ENCODE measurements at regions of chr10 and their contacts with region 1.

Region 1: DNA sequence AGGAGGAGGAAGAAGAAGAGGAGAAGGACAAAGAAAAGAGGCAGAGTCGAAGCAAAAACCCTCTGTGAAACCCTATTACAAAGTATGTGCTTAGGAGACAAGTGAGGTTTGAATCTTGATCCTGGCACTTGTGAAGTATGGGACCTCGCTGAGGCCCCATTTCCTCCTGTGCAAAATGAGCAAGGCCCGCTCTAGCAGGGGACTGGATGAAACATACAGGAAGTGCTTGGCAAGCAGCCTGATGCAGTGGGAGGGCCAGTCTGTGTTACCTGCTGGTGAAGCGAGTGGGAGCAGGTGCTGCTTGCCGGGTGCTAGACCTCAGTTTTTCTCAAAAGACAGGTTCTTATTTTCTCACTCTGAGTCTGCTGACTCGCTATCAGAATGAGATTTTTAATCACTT is 150.4 kb downstream of the JCAD start:
- DNase-seq: no peak

Region 2: GRCh38 chr10:29932991-29933390 is 24.0 kb after region 1 on chr10:
- intact Hi-C with region 1: loop called in 1 of 2 experiments (anchors 1 kb)
- DNase-seq: no peak

Measured in posterior vena cava (tissue), 2 donors.